Right ventricle myocardium inferior (tissue), 1 donor: ENCODE measurements at regions of chr17 and their contacts with region 1.

Region 1: DNA sequence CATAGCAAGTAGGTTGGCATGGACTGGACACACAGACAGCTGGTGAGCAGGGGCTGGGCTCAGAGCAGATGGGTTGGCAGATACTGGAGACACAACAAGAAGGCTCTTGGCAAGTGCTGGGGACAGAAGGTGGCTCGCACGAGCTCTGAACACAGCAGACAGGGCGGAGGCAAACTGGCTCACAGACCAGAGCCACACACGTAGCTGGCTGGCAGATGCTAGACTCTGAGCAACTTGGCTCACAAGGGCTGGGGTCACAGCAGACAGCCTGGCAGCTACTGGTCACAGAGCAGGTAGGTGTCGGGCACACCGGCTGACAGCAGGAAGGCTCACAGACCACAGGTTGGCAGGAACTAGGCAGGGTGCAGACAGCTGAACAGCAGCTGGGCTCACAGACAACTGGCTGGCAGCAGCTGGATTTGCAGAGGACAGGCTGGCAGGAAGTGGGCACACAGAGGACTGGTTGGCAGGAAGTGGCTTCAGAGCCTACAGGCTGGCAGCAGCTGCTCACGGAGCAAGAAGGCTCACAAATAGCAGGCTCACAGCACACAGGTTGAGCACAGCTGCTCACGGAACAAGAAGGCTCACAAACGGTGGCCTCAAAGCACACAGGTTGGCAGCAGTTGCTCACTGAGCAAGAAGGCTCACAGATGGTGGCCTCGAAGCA is 725 bp downstream of the KRTAP16-1 start:
- DNase-seq: peak; percentile 78
- ATAC-seq: peak; percentile 92

Region 2: DNA sequence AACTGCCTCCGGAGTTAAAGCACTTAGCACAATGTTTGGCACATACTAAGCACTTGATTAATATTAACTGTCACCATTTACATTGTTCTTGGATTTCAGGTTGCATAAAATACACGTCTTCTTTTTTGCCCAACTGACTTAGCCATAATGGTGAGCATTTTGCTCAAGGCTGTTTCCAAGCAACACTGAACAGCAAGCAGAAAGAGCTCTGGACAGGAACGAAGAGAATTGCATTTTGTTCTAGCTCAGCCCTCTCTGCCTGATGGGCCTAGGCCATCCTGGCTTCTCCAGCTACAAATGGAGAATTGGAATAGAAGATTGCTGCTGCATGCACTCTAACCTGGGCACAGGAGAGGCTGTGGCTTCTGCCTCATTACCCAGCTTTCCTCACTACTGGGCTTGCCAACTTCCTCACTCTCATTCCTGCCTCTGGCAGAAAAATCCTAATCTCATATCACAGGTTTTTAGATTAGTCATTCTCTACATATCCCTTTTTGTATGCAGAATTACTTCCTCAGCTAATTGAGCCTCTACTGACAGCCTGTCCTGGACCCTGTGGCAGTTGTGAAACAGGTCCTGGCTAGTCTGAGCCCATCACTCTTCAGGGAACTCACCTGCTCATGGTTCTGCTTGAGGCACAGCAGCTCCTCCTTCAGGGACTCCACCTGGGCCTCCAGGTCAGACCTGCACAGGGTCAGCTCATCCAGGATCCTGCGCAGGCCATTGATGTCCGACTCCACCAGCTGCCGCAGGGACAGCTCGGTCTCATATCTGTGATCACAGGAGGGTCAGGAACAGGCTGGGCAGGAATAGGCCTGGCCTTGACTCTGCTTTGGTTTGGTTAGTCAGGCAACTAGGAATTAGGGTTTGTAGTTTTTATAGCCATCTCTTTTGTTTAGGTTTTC is 39.7 kb after region 1 on chr17:
- intact Hi-C with region 1: no loop called
- DNase-seq: no peak
- ATAC-seq: no peak

Region 3: DNA sequence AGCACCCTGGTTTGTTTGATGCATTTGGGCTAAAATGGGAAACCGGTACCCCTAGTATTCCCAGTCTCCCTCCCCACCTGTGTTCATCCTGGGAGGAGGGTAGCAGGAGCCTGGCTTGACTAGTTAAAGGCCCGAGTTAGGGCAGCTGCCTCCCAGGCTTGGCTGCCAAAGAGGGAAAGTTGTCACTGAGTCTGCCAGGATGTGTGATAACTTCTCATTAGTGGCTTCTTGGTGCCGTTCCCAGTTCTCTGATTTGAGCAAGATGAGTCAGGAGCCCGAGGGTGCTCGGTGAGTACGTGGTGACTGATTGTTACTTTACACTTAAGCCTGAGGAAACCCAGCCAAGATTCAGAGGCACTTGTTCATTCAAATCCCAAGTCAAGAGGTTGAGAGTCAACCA is 156.3 kb after region 1 on chr17:
- intact Hi-C with region 1: loop called (anchors 10 kb)
- DNase-seq: no peak
- ATAC-seq: peak; percentile 93